ENCODE measurements at regions of chr17 and their contacts with region 1.

Region 1: GRCh38 chr17:58219001-58219788 is at the start of gene MKS1:
- DNase-seq: peak; percentile 90 to 96 (median 94)
- ATAC-seq: peak; percentile 98
- H3K4me3 ChIP-seq: peak within 1 kb of the TSS; percentile 68
- H3K4me3 Mint-ChIP-seq: peak within 1 kb of the TSS; percentile 86 to 96 (median 94)
- H3K27ac ChIP-seq: peak within 1 kb of the TSS; percentile 77
- H3K27ac Mint-ChIP-seq: peak within 1 kb of the TSS; percentile 92 to 98 (median 97)
- H3K4me1 ChIP-seq: peaks cover 8 to 9% of the 10 kb centered on the region in 2 donors
- H3K4me1 Mint-ChIP-seq: peaks cover 7 to 33% (median 23%) of the 10 kb centered on the region in 7 donors
- H3K27me3 ChIP-seq: no peaks in the 10 kb centered on the region
- H3K27me3 Mint-ChIP-seq: peaks cover 0 to 18% (median 0%) of the 10 kb centered on the region in 5 donors
- total RNA-seq, gene MKS1: 10.0 to 29.1 (median 19.7) TPM

Region 2: GRCh38 chr17:58156839-58157803 is 62.1 kb before region 1 on chr17:
- CTCF ChIA-PET with region 1: no interaction called
- POLR2A ChIA-PET with region 1: no interaction called
- intact Hi-C with region 1: loop called (anchors 2 to 5 kb)
- DNase-seq: peak; percentile 31 to 61 (median 55)
- ATAC-seq: peak; percentile 74
- H3K4me3 ChIP-seq: peak overlapping the region; percentile 56
- H3K4me3 Mint-ChIP-seq: peak overlapping the region; percentile 90 to 97 (median 94)
- H3K27ac ChIP-seq: peak overlapping the region; percentile 88
- H3K27ac Mint-ChIP-seq: peak overlapping the region; percentile 86 to 98 (median 93)
- H3K4me1 ChIP-seq: peaks cover 40 to 48% of the 10 kb centered on the region in 2 donors
- H3K4me1 Mint-ChIP-seq: peaks cover 41 to 86% (median 73%) of the 10 kb centered on the region in 7 donors
- H3K27me3 ChIP-seq: no peaks in the 10 kb centered on the region
- H3K27me3 Mint-ChIP-seq: peaks cover 0 to 29% (median 0%) of the 10 kb centered on the region in 5 donors

Region 3: GRCh38 chr17:58249270-58250133 is 30.3 kb after region 1 on chr17:
- CTCF ChIA-PET with region 1: no interaction called
- POLR2A ChIA-PET with region 1: interaction called, 5 read pairs
- intact Hi-C with region 1: loop called (anchors 1 to 2 kb)
- DNase-seq: peak; percentile 47 to 83 (median 74)
- ATAC-seq: peak; percentile 98
- H3K4me3 ChIP-seq: peak overlapping the region; percentile 65
- H3K4me3 Mint-ChIP-seq: peak overlapping the region; percentile 58 to 87 (median 81)
- H3K27ac ChIP-seq: no peak overlapping the region
- H3K27ac Mint-ChIP-seq: no peak overlapping the region
- H3K4me1 ChIP-seq: no peaks in the 10 kb centered on the region
- H3K4me1 Mint-ChIP-seq: peaks cover 0 to 21% (median 10%) of the 10 kb centered on the region in 7 donors
- H3K27me3 ChIP-seq: no peaks in the 10 kb centered on the region
- H3K27me3 Mint-ChIP-seq: peaks cover 3 to 50% (median 14%) of the 10 kb centered on the region in 5 donors

Region 4: DNA sequence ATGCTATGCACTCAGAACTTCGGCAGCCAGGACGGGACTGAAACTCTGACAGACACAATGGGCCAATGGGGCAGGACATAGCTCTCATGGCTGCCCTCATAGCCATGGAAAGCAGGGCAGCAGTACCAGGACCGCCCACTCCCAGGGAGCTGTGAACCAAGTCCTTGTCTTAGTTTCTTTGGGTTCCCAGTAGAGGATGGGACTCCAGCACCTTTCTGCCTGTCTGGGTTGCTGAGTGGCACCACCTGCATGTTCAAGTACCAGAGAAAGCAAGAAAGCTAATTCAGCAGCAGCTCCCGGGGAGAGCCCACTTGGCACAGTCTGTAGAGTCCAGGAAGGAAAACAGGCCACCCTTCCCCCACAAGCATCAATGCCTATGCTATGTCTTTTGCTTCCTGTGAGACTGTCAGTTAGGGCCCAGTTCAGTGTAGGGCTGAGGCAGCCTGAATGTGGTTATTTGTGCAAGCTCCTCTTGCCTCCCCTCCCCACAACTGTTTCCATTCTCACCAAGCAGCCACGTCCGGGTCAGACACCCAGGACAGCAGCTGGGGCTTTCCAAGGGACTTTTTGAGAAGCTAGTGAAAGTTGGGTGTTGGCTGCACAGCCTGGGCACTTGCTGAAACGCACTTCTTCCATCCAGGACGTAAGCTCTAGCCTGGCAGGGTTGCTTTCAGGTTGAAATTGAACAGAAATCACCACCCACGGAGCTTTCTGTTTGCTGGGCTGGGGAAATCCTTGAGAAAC is 125.0 kb after region 1 on chr17:
- CTCF ChIA-PET with region 1: interaction called, 4 read pairs
- POLR2A ChIA-PET with region 1: no interaction called
- intact Hi-C with region 1: loop called in 1 of 2 experiments (anchors 1 kb)
- DNase-seq: peak; percentile 48 to 96 (median 80)
- ATAC-seq: peak; percentile 91
- H3K4me3 ChIP-seq: peak overlapping the region; percentile 64
- H3K4me3 Mint-ChIP-seq: peak overlapping the region; percentile 80 to 100 (median 88)
- H3K27ac ChIP-seq: peak overlapping the region; percentile 98
- H3K27ac Mint-ChIP-seq: peak overlapping the region; percentile 91 to 100 (median 95)
- H3K4me1 ChIP-seq: peaks cover 72 to 78% of the 10 kb centered on the region in 2 donors
- H3K4me1 Mint-ChIP-seq: peaks cover 54 to 100% (median 87%) of the 10 kb centered on the region in 7 donors
- H3K27me3 ChIP-seq: no peaks in the 10 kb centered on the region
- H3K27me3 Mint-ChIP-seq: no peaks in the 10 kb centered on the region

Region 5: GRCh38 chr17:58631523-58632323 is 412.5 kb after region 1 on chr17:
- CTCF ChIA-PET with region 1: no interaction called
- POLR2A ChIA-PET with region 1: interaction called, 3 read pairs
- intact Hi-C with region 1: loop called (anchors 2 to 5 kb)
- DNase-seq: peak; percentile 74 to 95 (median 92)
- ATAC-seq: peak; percentile 90
- H3K4me3 ChIP-seq: peak overlapping the region; percentile 46
- H3K4me3 Mint-ChIP-seq: no peak overlapping the region
- H3K27ac ChIP-seq: peak overlapping the region; percentile 78
- H3K27ac Mint-ChIP-seq: no peak overlapping the region
- H3K4me1 ChIP-seq: peaks cover 6 to 12% of the 10 kb centered on the region in 2 donors
- H3K4me1 Mint-ChIP-seq: peaks cover 0 to 9% (median 5%) of the 10 kb centered on the region in 7 donors
- H3K27me3 ChIP-seq: no peaks in the 10 kb centered on the region
- H3K27me3 Mint-ChIP-seq: peaks cover 0 to 2% (median 0%) of the 10 kb centered on the region in 5 donors

Region 6: GRCh38 chr17:58969156-58969555 is 750.0 kb after region 1 on chr17:
- CTCF ChIA-PET with region 1: no interaction called
- POLR2A ChIA-PET with region 1: no interaction called
- intact Hi-C with region 1: no loop called
- DNase-seq: no peak
- ATAC-seq: no peak
- H3K4me3 ChIP-seq: no peak overlapping the region
- H3K4me3 Mint-ChIP-seq: no peak overlapping the region
- H3K27ac ChIP-seq: no peak overlapping the region
- H3K27ac Mint-ChIP-seq: peak overlapping the region in 1 of 9 donors; percentile 51
- H3K4me1 ChIP-seq: no peaks in the 10 kb centered on the region
- H3K4me1 Mint-ChIP-seq: peaks cover 0 to 8% (median 5%) of the 10 kb centered on the region in 7 donors
- H3K27me3 ChIP-seq: no peaks in the 10 kb centered on the region
- H3K27me3 Mint-ChIP-seq: peaks cover 0 to 15% (median 0%) of the 10 kb centered on the region in 5 donors